Activated CD4-positive, alpha-beta T cell treated with anti-CD3 and anti-CD28 coated beads, Interleukin-2, amount 10 ng/mL, durations not matched to agents 24 days and 14 days (primary cell): ENCODE measurements at regions of chr5 and their contacts with region 1.

Region 1: DNA sequence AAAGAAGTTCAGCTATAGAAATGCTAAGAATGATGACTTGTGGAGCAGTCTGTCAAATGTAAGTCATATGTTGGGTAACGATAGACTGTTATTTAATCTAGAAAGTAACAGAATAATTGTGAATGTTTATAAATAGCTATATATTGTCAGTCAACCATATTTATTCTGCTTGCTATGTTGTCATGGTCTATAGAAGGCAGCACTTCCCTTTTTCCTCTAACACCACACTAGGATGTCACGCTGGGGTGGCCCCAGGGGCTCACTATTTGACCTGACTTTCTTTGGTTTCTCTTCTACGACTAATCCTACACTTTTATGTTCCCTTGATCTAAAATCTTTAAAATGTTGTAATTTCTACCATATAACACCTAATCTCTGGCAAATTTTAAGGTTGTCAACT is 20.5 kb downstream of the ERAP2 start:
- DNase-seq: peak; percentile 60
- H3K4me3 Mint-ChIP-seq: peak overlapping the region; percentile 84
- H3K27ac Mint-ChIP-seq: peak overlapping the region; percentile 94
- H3K4me1 Mint-ChIP-seq: peaks cover 51% of the 10 kb centered on the region
- H3K27me3 Mint-ChIP-seq: no peaks in the 10 kb centered on the region

Region 2: DNA sequence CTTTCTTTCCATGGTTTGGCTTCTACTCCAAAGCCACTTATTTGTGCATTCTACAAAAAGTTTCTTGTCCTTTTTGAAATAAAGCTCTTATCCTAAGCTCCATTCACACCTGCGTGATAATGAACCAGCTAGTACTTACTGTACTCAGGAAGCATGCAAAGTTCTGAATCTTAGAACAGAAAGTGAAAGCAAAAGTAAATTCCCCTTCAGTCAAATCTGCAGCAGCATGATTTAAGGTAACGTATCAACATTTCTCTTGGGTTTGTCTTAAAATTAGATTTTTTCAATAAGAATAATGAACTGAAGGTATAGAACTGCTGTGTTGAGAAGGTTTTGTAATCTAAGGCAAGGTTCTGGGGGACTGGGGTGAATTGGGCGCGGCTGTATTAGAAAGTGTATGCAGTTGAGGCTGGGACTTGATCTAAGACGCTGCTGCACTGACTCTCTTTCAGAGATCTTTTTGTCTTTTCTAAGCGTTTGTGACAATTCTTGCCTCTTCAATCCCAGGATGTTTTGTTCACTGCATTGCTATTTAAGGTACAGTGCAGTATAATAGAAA is 20.4 kb before region 1 on chr5 and contains the start of gene ERAP2:
- intact Hi-C with region 1: loop called (anchors 1 kb)
- DNase-seq: peak; percentile 77
- H3K4me3 Mint-ChIP-seq: peak within 1 kb of the TSS; percentile 96
- H3K27ac Mint-ChIP-seq: peak within 1 kb of the TSS; percentile 98
- H3K4me1 Mint-ChIP-seq: peaks cover 62% of the 10 kb centered on the region
- H3K27me3 Mint-ChIP-seq: no peaks in the 10 kb centered on the region
- total RNA-seq, gene ERAP2: 48.9 and 51.3 TPM in 2 replicates

Region 3: DNA sequence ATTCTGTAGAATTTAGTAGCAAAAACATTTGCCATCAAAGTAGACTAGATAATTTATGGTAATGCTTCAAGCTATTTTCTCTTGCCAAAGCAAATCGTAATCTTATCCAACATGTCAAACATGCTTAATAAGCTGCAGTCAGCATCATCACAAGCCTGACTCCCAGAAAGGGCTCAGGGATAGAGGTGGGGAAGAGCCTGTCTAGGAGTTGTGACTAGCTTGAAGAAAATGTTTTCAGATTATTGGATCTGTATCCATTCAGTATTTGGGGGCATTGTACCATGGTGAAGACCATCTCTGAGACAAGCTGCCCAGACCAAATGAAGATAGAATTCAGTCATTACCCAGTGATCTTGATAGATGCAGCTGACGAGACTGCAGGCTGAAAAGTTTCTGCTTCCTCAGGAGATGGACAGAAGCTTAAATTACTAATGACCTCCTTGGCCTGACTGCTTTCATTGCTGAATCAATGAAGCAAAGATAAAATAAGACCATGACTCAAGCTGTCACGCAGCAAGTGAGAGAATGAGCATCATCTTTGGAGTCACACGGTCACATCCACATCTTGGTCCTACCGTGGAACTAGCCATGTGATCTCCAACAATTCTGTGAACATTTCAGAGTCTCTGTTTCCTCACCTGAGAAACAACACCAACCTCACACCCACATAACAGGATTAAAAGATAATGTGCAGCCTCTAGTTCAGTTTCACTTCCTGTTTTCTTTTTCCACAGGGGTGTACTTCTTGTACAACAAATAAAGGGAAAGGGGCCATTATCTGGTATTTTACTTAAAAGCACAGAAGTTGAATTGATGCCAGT is 11.1 kb before region 1 on chr5:
- intact Hi-C with region 1: loop called (anchors 1 kb)
- DNase-seq: peak; percentile 85
- H3K4me3 Mint-ChIP-seq: peak overlapping the region; percentile 61
- H3K27ac Mint-ChIP-seq: peak overlapping the region; percentile 84
- H3K4me1 Mint-ChIP-seq: peaks cover 61% of the 10 kb centered on the region
- H3K27me3 Mint-ChIP-seq: no peaks in the 10 kb centered on the region

Region 4: GRCh38 chr5:96919754-96920197 is 23.0 kb after region 1 on chr5:
- intact Hi-C with region 1: loop called (anchors 2 kb)
- DNase-seq: peak; percentile 56
- H3K4me3 Mint-ChIP-seq: no peak overlapping the region
- H3K27ac Mint-ChIP-seq: peak overlapping the region; percentile 34
- H3K4me1 Mint-ChIP-seq: peaks cover 30% of the 10 kb centered on the region
- H3K27me3 Mint-ChIP-seq: no peaks in the 10 kb centered on the region

Region 5: GRCh38 chr5:96957254-96958049 is 60.6 kb after region 1 on chr5:
- intact Hi-C with region 1: loop called (anchors 2 kb)
- DNase-seq: no peak
- H3K4me3 Mint-ChIP-seq: peak overlapping the region; percentile 58
- H3K27ac Mint-ChIP-seq: peak overlapping the region; percentile 84
- H3K4me1 Mint-ChIP-seq: peaks cover 61% of the 10 kb centered on the region
- H3K27me3 Mint-ChIP-seq: no peaks in the 10 kb centered on the region